Right lobe of liver (tissue), 6 donors: ENCODE measurements at regions of chr5 and their contacts with region 1.

Region 1: DNA sequence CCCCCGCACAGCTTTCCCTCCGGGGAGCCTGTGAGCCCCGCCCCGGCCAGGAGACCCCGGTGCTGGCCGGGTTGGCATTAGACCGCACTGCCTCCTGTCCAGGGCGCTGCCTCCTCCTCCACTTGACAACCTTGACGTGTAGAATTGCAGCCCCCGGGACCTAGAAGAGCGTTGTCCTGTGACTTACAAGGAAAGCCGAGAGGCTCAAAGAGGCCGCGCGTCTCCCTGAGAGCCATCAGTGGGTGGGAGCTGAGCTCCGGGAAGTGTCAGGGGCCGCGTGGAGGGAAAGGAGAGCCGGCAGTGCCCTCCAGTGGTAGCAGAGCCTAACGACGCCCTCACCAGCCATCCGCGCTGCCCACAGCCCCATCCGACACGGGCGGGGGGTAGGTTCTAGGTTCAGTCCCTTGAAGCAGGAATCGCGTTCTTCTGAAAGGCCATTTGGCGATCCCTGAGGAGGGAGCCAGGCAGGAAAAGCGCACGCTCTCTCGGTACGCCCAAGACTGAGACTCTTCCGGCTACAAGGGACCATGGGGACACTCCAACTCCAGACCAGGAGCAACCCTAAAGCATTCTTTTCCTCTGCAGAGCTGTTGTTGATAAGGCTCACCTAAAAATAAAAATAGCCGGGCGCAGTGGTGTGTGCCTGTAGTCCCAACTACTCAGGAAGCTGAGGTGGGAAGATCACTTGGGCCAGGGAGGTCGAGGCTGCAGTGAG is 40.6 kb upstream of the SAP30L start:
- DNase-seq: peak; percentile 74 to 81 (median 81)
- ATAC-seq: peak; percentile 98 to 100 (median 99)
- H3K4me3 ChIP-seq: peak overlapping the region; percentile 7 to 32 (median 18)
- H3K27ac ChIP-seq: no peak overlapping the region
- H3K4me1 ChIP-seq: peaks cover 0 to 7% (median 0%) of the 10 kb centered on the region in 4 donors
- H3K27me3 ChIP-seq: no peaks in the 10 kb centered on the region
- CTCF ChIP-seq: peak; percentile 84 to 93 (median 87)
- POLR2A ChIP-seq: no peak

Region 2: GRCh38 chr5:153974131-153974812 is 431.0 kb before region 1 on chr5:
- intact Hi-C with region 1: loop called in 1 of 2 experiments (anchors 5 kb)
- DNase-seq: no peak
- ATAC-seq: peak in 3 of 4 donors; percentile 77 to 87 (median 82)
- H3K4me3 ChIP-seq: no peak overlapping the region
- H3K27ac ChIP-seq: no peak overlapping the region
- H3K4me1 ChIP-seq: no peaks in the 10 kb centered on the region
- H3K27me3 ChIP-seq: no peaks in the 10 kb centered on the region
- CTCF ChIP-seq: peak; percentile 63 to 74 (median 70)
- POLR2A ChIP-seq: no peak

Region 3: DNA sequence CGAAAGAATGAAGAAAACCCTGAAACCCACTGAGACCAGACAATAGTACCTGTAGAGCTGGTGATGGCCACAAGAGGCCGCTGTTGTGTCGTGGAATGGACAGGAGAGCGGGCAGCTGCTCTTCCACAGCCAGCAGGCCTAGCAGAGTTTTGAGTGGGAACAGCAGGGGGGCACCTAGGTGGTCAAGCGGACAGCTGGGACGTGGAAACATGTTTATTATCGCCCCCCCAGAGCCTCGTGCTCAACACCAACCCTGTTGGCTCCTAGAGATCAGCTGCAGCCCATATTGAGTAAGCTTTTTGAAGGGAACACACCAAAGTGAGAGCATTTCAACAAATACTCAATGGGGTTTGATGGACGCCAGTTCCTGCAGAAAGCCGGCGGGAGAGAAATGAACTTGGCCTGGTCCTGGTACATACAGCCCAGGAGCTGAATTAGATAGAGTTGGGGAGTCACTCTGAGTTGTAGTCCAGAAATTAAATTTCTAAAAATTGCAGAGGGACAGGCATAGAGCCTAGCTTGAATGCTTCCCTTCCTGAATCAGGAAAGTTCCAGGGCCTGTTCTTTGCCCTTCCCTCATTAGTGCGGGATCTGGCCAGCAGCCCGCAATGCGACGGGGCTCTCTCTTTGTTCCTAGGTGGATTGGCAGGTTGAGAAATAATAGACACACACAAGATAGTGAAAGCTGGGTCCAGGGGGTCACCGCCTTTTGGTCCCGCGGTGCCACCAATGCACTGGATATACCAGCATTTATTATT is 332.6 kb before region 1 on chr5:
- intact Hi-C with region 1: loop called (anchors 10 kb)
- DNase-seq: peak; percentile 82 to 87 (median 83)
- ATAC-seq: peak; percentile 98 to 100 (median 99)
- H3K4me3 ChIP-seq: no peak overlapping the region
- H3K27ac ChIP-seq: no peak overlapping the region
- H3K4me1 ChIP-seq: peaks cover 0 to 16% (median 0%) of the 10 kb centered on the region in 4 donors
- H3K27me3 ChIP-seq: no peaks in the 10 kb centered on the region
- CTCF ChIP-seq: peak; percentile 90 to 92 (median 91)
- POLR2A ChIP-seq: no peak

Region 4: GRCh38 chr5:154273028-154273617 is 132.1 kb before region 1 on chr5:
- intact Hi-C with region 1: no loop called
- DNase-seq: no peak
- ATAC-seq: peak; percentile 46 to 67 (median 64)
- H3K4me3 ChIP-seq: no peak overlapping the region
- H3K27ac ChIP-seq: no peak overlapping the region
- H3K4me1 ChIP-seq: peaks cover 0 to 12% (median 0%) of the 10 kb centered on the region in 4 donors
- H3K27me3 ChIP-seq: no peaks in the 10 kb centered on the region
- CTCF ChIP-seq: no peak
- POLR2A ChIP-seq: no peak